Activated CD4-positive, alpha-beta T cell treated with anti-CD3 and anti-CD28 coated beads, Interleukin-2, amount 10 ng/mL, durations not matched to agents 24 days and 14 days (primary cell): ENCODE measurements at regions of chr10 and their contacts with region 1.

Region 1: DNA sequence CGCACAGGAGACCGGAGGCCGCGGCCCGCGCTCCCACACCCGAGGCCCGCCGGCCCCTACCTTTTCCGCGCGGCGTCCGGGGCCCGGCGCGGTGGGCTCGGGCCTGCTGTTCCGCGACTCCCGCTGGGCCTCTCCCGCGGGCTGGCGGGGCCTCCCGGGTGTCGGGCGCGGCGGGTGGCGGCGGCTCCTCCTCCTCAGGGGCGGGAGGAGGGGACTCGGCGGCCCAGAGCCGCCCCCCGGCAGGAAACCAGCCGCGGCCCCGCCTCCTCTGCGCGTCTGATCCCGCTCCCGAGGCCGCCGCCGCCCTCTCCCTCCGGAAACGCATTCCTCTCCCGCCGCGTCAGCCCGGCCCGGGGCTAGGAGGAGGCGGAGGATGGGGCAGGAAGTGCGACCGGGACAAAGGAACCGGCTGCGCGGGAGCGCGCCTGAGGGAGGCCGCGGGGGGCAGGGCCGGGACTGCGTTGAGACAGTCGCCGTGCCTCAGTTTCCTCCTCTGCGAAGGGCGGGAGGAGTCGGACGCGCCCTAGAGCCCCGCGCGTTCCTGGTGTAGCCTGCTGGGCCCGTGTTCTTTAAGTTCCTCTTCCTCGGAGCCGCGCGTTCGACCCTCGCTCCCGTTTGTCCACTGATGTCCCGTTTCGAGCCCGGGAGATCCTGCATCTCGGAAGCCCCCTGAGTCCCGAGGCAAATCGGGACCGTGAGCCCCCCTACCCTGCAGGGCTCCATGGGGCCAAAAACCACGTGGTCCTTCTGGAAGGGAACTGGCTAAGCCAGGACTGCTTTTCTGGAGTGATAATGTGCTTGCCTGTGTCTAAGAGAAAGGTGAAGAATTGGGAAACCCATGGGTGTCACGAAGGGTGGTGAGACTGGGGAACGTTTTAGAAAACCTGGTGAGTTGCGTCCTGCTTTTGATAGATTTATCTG is at the start of gene ITGB1:
- DNase-seq: peak; percentile 96
- H3K4me3 Mint-ChIP-seq: peak within 1 kb of the TSS; percentile 86
- H3K27ac Mint-ChIP-seq: peak within 1 kb of the TSS; percentile 92
- H3K4me1 Mint-ChIP-seq: peaks cover 32% of the 10 kb centered on the region
- H3K27me3 Mint-ChIP-seq: peaks cover 9% of the 10 kb centered on the region
- total RNA-seq, gene ITGB1: 50.5 and 57.5 TPM in 2 replicates

Region 2: DNA sequence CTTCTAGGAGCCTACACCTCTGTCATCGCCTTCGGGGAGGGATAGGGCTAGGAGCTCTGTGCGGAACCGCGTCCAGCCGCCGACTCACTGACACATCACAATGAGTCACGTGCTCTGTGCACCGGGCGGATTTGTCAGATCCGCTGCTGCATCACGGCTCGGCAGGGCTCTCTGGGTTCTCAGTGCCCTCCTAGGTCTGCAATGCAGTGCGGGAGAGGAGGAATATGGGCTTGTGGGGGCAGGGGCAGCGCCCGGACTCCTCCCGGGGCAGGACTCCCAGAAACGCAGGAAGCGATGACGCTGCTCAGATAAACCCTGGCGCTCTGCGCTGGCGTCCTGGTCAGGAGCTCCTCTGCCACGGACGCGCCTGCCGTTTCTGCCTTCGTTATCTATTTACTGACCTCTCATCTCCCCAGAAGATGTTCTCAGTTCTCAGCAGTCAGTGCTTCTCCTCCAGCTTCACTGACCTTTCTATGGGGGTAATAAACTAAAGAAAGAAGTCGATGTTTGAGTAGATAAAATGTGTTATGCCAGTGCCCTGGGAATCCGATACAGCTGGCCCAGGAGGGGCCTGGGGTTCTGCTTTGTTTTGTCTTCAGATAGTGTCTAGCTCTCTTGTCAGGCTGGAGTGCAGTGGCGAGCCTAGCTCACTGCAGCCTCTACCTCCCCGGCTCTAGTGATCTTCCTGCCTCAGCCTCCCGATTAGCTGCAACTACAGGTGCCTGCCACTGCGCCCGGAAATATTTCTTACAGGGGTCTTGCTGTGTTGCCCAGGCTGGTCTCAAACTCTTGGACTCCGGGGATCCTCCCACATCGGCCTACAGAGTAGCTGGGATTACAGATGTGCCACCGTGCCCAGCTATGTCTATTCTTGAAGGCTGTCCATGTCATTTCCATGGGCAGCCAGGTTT is 22.5 kb after region 1 on chr10:
- intact Hi-C with region 1: loop called (anchors 1 kb)
- DNase-seq: peak; percentile 92
- H3K4me3 Mint-ChIP-seq: peak overlapping the region; percentile 90
- H3K27ac Mint-ChIP-seq: peak overlapping the region; percentile 87
- H3K4me1 Mint-ChIP-seq: peaks cover 20% of the 10 kb centered on the region
- H3K27me3 Mint-ChIP-seq: peaks cover 2% of the 10 kb centered on the region

Region 3: DNA sequence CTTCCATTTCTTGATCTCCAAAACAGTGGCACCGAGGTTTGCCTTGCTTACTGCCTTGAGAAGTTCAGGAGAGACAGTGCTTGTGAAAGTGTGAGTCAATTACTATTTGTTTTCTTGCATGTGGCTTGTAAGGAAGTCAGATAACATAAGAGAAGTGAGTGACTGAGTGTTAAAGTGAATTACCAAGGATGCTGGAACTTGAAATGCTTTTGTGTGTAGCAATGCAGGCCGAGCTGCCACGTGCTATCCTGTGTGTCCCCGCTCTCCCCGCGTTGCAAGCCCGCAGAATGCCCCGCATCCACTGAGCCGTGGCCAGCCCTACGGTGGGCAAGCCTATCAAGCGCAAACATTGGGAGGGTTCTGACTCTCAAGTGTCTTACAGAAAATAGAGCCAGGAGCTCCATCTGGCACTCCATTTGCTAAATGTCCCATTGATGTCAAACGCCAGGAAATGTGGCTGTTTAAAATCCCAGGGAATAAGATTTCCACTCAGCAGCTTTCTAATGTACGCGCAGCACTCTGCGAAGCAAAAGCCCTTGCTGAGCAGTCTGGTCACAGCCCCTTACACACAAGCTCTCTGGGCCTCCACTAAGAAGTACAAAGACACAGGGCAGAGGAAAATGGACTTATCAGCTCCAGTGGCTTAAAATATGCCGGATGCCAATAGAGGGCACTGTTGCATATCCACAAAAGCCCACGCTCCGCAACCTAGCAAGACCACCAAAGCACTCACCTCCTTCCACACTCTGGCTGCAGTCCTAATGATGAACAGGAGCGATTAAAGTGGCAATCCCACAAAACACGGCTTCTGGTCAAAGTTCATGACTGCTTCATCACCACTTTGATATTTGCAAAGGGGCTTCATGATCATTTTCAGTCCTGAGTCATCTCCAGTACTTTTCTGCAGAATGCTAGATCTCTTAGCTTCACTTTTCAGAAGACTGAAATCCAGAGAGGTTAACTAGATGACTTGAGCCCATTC is 157.7 kb after region 1 on chr10:
- intact Hi-C with region 1: loop called (anchors 5 kb)
- DNase-seq: no peak
- H3K4me3 Mint-ChIP-seq: no peak overlapping the region
- H3K27ac Mint-ChIP-seq: peak overlapping the region; percentile 32
- H3K4me1 Mint-ChIP-seq: peaks cover 45% of the 10 kb centered on the region
- H3K27me3 Mint-ChIP-seq: no peaks in the 10 kb centered on the region

Region 4: DNA sequence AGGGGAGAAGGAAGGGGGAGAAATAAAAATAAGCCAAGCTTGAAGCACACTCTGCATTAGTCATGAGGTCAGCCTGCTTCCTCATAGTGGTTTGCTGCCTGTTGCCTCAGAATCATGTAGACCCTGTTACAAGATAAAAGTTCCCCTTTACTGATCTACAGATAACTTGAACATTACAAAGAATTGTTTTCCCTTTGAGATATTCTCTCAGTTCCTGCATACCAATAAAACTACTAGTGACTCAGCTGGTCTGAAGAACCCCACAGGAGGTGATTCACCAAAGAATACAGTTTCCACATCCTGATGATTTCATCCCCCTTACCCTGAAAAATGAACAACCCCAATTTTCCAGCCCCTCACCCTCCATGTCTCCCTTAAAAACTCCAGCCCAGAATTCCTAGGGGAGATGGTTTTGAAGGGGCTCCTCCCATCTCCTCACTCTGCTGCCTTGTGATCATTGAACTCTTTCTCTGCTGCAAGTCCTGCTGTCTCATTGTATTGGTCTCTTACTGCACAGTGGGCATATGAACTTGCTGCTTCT is 407.6 kb after region 1 on chr10:
- intact Hi-C with region 1: loop called (anchors 10 kb)
- DNase-seq: peak; percentile 57
- H3K4me3 Mint-ChIP-seq: no peak overlapping the region
- H3K27ac Mint-ChIP-seq: peak overlapping the region; percentile 86
- H3K4me1 Mint-ChIP-seq: peaks cover 15% of the 10 kb centered on the region
- H3K27me3 Mint-ChIP-seq: no peaks in the 10 kb centered on the region